H1 (cell line): ENCODE measurements at regions of chr6 and their contacts with region 1.

Region 1: DNA sequence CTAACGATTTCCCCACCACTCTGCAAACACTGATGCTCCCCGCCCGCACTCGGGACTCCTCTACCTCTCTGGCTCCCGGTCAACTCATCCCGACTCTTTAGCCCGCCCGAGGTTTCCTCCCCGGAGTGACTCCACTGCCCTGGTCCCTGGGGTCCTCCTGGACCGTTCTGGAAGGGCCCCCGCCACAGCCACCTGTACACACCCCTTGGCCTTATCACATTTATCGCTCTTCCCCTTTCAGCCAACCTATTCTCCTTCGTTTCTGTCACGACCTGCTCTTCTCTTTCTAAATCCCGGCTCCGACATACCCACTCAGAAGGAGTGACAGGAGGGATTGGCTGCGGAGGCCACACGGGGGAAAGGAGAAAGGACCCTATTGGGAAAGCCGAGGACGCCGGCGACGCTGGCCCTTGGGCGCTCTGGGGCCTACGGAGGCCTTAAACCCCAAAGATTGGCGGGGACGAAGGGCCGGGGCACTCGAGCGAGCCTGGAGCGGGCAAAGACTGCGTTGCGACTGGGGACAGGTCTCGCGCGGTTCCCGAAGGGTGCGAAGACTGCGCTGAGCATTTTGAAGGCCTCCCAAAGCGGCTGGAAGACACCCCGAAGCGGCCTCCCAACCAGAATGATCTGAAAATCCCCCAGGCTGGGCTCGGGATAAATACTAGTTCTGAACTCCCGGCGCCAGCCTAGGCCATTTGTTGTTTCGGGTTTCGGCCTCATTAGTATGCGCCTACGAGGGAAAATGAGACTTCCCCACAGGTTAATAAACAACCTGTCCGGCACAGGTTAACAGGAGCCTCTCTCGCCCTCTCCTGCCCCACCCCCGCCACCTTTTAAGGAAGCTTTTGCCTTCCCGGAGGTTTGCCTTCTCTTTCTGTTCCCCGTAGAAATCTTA is 9.2 kb downstream of the SIM1 start:
- DNase-seq: peak in 1 of 2 experiments; percentile 69
- H3K4me3 ChIP-seq: peak overlapping the region; percentile 17 to 52 (median 28); a peak in 7 of 8 replicates
- H3K27ac ChIP-seq: no peak overlapping the region
- H3K4me1 ChIP-seq: peaks cover 9 to 38% (median 27%) of the 10 kb centered on the region in 4 experiments
- H3K27me3 ChIP-seq: peaks cover 95 to 100% (median 98%) of the 10 kb centered on the region in 4 experiments
- CTCF ChIP-seq: no peak
- EP300 ChIP-seq: no peak
- POLR2A ChIP-seq: no peak
- RAD21 ChIP-seq: no peak

Region 2: DNA sequence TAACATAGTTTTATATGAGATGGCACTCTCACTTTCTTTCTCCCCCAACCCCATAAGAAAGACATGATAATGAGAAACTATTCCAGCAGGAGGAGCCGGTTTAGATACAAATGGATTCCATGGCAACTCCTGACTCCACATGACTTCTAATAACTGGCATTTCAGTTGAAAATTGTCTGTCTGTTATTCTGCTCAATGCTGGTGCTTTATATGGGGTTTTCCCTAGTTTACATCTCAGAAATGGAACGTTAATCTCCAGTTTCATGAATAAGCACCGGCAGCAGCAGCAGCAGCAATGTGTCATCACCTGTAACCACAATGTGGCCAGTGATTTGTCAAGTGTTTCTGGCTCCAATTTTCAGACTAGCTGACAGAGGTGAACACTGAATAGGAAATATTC is 17.2 kb after region 1 on chr6:
- CTCF ChIA-PET with region 1: interaction called, 215 read pairs
- POLR2A ChIA-PET with region 1: interaction called, 3 read pairs
- DNase-seq: no peak
- H3K4me3 ChIP-seq: no peak overlapping the region
- H3K27ac ChIP-seq: no peak overlapping the region
- H3K4me1 ChIP-seq: peaks cover 0 to 6% (median 4%) of the 10 kb centered on the region in 4 experiments; a peak in 5 of 7 replicates
- H3K27me3 ChIP-seq: peaks cover 25 to 44% (median 33%) of the 10 kb centered on the region in 4 experiments
- CTCF ChIP-seq: no peak
- EP300 ChIP-seq: no peak
- POLR2A ChIP-seq: no peak
- RAD21 ChIP-seq: no peak; a peak in 1 of 4 replicates